Activated naive CD4-positive, alpha-beta T cell treated with anti-CD3 and anti-CD28 coated beads for 36 hours (primary cell): ENCODE measurements at regions of chr2 and their contacts with region 1.

Region 1: DNA sequence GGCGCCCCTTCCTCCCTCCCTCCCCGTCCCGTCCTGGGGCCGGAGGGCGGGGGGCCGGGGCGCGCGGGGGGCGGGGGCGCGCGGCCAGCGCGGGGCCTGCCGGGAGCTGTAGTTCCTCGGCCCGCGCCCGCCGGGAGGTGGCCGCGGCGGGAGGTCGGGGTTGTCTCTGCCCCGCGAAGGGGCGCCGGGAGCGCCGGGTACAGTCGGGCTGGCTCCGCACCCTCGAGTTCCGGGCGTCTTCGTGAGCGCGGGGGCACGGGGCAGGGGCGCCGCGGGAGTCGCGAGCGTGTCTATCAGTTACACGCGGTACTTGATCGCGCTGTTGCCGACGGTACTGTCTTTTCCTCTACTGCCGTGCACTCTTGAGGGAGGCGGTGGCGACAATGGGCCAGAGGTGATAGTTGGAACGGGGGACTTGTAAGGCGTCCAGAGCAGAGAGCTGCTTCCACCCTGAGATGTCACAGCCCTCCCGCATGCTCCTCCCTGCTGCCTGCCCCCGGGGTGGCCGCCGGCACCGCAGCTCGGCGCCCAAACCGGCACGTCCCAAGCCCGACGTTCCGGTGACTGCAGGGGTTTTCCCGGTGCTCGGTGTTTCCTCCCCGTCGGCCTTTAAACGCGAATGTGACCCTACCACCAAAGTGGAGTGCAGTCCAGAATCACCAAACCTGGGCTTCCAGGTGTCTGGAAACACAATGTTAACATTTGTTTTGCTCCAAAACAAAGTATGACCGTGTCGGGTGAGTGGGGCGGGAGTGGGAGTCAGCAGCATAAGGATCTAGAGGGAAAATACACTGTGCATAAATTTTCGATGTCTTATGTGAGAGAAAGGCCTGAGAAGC is at the start of gene PRKD3:
- DNase-seq: peak; percentile 51
- H3K4me3 Mint-ChIP-seq: peak within 1 kb of the TSS; percentile 93
- H3K27ac Mint-ChIP-seq: peak within 1 kb of the TSS; percentile 84
- H3K4me1 Mint-ChIP-seq: peaks cover 29% of the 10 kb centered on the region
- H3K27me3 Mint-ChIP-seq: peaks cover 17% of the 10 kb centered on the region
- total RNA-seq, gene PRKD3: 13.0 TPM

Region 2: DNA sequence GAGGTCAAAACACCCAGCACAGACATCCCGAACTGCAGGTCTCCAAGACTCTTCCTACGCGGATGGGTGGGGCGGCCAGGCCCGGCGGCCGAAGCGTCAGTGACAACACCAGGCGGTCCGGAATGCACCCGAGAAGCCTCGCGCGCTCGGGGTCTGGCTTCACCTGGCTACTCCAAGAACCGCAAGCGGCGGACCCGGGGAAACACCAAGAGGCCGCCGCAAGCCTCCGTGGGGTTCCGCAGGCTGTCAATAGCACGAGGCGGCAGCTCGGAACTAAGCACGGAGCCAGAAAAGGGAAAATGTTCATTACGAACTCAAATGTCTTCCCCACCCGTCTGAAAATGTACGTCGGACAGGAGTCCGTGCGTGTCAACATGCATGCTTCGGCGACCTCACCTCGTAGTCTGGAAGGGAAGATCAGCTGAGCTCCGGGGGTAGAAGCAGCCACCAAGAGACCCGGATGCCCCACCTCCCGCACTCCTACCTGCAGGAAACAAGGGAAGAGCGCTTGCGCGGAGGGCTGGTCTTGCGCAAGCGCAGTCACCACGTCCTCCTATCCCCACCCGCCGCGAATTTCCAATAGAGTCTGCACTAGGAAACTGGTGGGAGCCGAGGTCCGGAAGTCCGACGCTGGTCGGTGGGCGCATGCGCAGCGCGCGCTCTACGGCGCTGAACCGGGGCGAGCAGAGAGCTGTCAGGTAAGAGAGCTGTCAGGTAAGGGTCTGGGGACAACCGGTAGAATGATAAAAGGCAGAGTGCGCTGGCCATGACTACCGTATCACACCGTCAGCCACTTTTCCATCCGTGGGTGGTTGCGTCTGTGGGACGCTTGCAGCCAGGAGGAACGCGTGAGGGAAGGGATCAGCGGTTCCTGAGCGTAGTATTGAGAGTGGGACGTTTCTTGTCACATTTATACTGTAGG is 240.9 kb before region 1 on chr2 and contains the starts of genes GPATCH11 and HEATR5B:
- CTCF ChIA-PET with region 1: no interaction called
- intact Hi-C with region 1: loop called (anchors 2 kb)
- DNase-seq: peak; percentile 93
- H3K4me3 Mint-ChIP-seq: no peak within 1 kb of the TSS
- H3K27ac Mint-ChIP-seq: no peak within 1 kb of the TSS
- H3K4me1 Mint-ChIP-seq: peaks cover 26% of the 10 kb centered on the region
- H3K27me3 Mint-ChIP-seq: no peaks in the 10 kb centered on the region
- total RNA-seq, gene GPATCH11: 9.8 to 10.4 TPM
- total RNA-seq, gene HEATR5B: 15.5 to 15.8 TPM

Region 3: DNA sequence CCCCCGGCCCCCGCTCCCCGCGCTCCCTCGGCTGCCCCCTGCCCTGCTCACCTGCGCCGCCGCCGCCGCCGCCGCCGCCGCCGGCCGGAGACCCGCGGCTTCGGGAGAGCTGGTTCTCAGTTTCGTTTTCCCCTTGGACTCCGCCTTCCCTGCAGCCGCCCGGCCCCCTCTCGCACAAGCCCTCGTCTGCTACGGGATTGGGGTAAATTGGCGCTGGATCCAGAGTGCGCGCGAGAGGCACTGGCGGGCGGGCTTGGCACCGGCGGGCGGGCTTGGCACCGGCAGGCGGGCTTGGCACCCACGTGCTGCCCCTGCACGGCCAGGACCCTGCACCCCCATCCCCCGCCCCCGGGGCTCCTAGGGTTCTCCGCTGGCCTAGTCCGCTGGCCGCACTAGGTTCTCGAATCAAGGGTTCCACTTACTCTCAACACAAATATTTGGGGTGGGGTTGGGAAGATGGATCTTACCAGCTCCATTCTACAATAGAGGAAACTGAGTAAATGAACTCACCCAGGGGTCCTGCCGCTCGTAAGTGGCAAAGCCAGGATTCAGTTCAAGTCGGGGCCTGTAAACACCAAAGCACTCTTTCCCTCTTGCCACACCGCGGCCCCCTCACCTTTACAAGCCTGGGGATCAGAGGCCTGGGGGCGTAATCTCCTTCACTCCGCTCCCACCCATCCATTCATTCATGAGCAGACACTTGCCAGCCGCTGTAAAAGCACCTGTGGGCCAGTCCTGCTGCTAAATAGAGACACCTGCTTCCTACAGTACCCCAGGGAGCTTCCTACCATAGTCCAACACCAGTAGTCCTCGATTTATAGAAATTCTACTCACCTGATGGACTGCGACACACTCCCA is 167.9 kb before region 1 on chr2 and contains the start of gene EIF2AK2:
- CTCF ChIA-PET with region 1: no interaction called
- intact Hi-C with region 1: loop called (anchors 2 kb)
- DNase-seq: peak; percentile 80
- H3K4me3 Mint-ChIP-seq: peak within 1 kb of the TSS; percentile 86
- H3K27ac Mint-ChIP-seq: peak within 1 kb of the TSS; percentile 85
- H3K4me1 Mint-ChIP-seq: peaks cover 30% of the 10 kb centered on the region
- H3K27me3 Mint-ChIP-seq: no peaks in the 10 kb centered on the region
- total RNA-seq, gene EIF2AK2: 54.5 to 55.7 TPM

Region 4: GRCh38 chr2:37344453-37345361 is 19.7 kb after region 1 on chr2 and contains the start of gene QPCT:
- CTCF ChIA-PET with region 1: no interaction called
- intact Hi-C with region 1: loop called (anchors 2 kb)
- DNase-seq: peak; percentile 60
- H3K4me3 Mint-ChIP-seq: peak within 1 kb of the TSS; percentile 72
- H3K27ac Mint-ChIP-seq: no peak within 1 kb of the TSS
- H3K4me1 Mint-ChIP-seq: peaks cover 9% of the 10 kb centered on the region
- H3K27me3 Mint-ChIP-seq: peaks cover 32% of the 10 kb centered on the region
- total RNA-seq, gene QPCT: 0.42 TPM in 1 of 2 experiments, not detected in the other

Region 5: GRCh38 chr2:37672104-37672869 is 347.3 kb after region 1 on chr2:
- CTCF ChIA-PET with region 1: no interaction called
- intact Hi-C with region 1: loop called (anchors 5 kb)
- DNase-seq: peak; percentile 71
- H3K4me3 Mint-ChIP-seq: peak overlapping the region; percentile 75
- H3K27ac Mint-ChIP-seq: peak overlapping the region; percentile 63
- H3K4me1 Mint-ChIP-seq: peaks cover 40% of the 10 kb centered on the region
- H3K27me3 Mint-ChIP-seq: no peaks in the 10 kb centered on the region

Region 6: DNA sequence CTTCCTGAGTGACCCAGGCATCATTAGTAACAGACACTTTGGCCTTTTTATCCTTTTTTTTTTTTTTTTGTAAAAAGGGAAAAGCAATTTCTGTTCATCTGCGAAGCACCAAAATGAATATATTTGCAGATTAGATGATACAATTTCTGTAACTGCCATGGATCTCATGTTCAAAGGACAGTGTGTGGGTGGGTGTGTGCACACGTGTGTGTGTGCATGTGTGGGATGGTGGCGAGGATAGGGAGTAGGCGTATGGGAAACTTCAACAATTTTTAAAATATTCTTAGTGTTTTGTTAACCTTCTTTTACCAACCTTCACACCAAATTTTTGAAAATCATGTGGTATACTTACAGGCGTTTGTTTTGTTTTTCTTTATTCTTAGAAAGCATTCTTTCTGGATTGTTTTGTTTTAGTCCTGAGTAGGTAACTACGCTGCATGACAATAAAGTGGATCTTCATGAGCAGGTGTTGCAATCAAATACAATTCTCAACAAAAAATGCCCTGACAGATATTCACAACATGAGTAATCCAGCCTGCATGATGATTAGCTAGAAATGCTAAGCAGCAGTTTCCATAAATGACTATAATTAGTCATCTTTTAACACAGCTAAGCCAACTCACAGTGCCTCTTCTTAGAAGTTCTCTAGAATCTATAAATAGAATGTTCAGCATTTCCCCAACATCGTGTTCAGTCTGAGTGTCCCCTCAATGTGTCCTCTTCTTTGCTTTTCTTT is 546.6 kb after region 1 on chr2:
- CTCF ChIA-PET with region 1: no interaction called
- intact Hi-C with region 1: loop called (anchors 2 kb)
- DNase-seq: no peak
- H3K4me3 Mint-ChIP-seq: peak overlapping the region; percentile 25
- H3K27ac Mint-ChIP-seq: peak overlapping the region; percentile 86
- H3K4me1 Mint-ChIP-seq: peaks cover 30% of the 10 kb centered on the region
- H3K27me3 Mint-ChIP-seq: peaks cover 12% of the 10 kb centered on the region